ENCODE measurements at regions of chr18 and their contacts with region 1.

Region 1: GRCh38 chr18:23619388-23619881 is 33.1 kb upstream of the NPC1 start:
- DNase-seq: no peak
- H3K4me3 ChIP-seq: peak overlapping the region; percentile 55 to 72
- H3K27ac ChIP-seq: peak overlapping the region in 1 of 2 donors; percentile 21
- H3K4me1 ChIP-seq: peaks cover 0 to 4% of the 10 kb centered on the region in 2 donors
- H3K27me3 ChIP-seq: no peaks in the 10 kb centered on the region
- CTCF ChIP-seq: peak in 1 of 3 experiments; percentile 5

Region 2: GRCh38 chr18:23812546-23813440 is 193.4 kb after region 1 on chr18:
- intact Hi-C with region 1: loop called (anchors 1 kb)
- DNase-seq: no peak
- H3K4me3 ChIP-seq: no peak overlapping the region
- H3K27ac ChIP-seq: no peak overlapping the region
- H3K4me1 ChIP-seq: no peaks in the 10 kb centered on the region
- H3K27me3 ChIP-seq: no peaks in the 10 kb centered on the region
- CTCF ChIP-seq: peak; percentile 30 to 59 (median 35)

Measured in ascending aorta (tissue), 2 donors.